Panc1 (cell line): ENCODE measurements at regions of chr7 and their contacts with region 1.

Region 1: DNA sequence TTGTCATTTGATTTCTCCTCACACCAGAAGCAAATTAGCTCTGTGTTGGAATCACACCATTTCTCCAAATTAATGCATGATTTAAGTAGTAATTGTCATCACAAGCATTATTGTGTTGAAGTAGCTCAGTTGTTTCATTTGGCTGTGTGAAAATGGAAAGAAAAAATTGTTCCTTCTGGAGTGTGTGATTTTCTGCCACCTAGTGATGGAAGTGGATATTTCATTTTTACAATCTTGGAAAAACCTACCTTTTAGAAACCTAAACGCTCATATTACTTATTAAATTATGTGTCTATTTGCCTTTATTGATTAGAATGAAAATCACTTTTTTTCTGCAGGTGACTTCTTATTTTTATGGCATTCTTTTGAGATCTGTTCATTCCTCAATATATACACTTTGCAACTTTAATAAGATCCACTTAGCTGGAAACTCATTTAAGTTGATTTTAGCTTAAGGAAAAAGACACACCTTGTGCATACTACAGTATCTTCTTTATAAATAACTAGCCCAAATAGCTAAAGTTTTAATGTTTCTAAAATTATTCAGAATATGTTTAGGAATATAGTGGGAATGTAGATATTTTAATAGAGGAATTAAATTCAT is 50.0 kb downstream of the SRI start:
- DNase-seq: peak; percentile 2
- ATAC-seq: no peak
- H3K4me3 ChIP-seq: no peak overlapping the region
- H3K27ac ChIP-seq: no peak overlapping the region
- H3K4me1 ChIP-seq: no peaks in the 10 kb centered on the region
- H3K27me3 ChIP-seq: no peaks in the 10 kb centered on the region; the same call in 1 of the 2 replicates
- CTCF ChIP-seq: peak; percentile 71; the same call in 1 of the 2 replicates

Region 2: DNA sequence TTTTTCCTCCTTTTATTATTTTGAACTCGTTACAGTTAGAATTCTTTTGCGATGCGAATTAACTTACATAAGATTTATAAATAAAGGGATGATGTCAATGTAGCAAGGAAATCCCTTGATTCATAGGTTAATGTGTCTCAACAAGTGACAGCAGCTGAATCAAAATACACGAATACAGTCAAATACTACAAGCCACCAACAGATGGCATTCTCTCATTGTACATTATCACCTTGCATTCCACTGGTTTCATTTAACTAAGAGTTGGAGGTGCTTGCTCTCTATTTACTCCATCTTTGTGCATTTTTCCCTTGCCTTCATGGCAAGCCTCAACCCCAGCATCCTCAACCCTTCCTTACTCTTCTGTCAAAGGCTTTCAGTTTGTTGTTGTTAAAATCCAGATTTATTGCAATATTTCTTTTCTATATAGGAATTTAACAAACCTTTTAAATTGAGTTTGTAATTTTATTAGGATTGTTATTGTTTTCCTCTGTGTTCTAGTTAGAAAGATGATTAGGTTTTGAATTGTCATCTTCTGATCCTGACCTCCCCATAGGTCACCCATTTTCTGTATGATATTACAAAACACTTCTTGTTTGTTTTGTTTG is 371.9 kb before region 1 on chr7:
- CTCF ChIA-PET with region 1: no interaction called
- POLR2A ChIA-PET with region 1: no interaction called
- in situ Hi-C with region 1: no loop called
- intact Hi-C with region 1: loop called (anchors 10 kb)
- DNase-seq: peak; percentile 58
- ATAC-seq: peak; percentile 74
- H3K4me3 ChIP-seq: no peak overlapping the region
- H3K27ac ChIP-seq: no peak overlapping the region
- H3K4me1 ChIP-seq: no peaks in the 10 kb centered on the region
- H3K27me3 ChIP-seq: no peaks in the 10 kb centered on the region
- CTCF ChIP-seq: peak; percentile 69; the same call in 1 of the 2 replicates